ENCODE measurements at regions of chr12 and their contacts with region 1.

Region 1: GRCh38 chr12:110698171-110698902 is 9.4 kb upstream of the HVCN1 start:
- DNase-seq: peak; percentile 77 to 92 (median 78)
- ATAC-seq: peak; percentile 97
- H3K4me3 ChIP-seq: peak overlapping the region; percentile 10; the same call in 1 of the 2 replicates
- H3K27ac ChIP-seq: peak overlapping the region; percentile 72
- H3K4me1 ChIP-seq: peaks cover 35 to 42% of the 10 kb centered on the region in 2 experiments
- H3K27me3 ChIP-seq: no peaks in the 10 kb centered on the region
- CTCF ChIP-seq: peak; percentile 93 to 98 (median 96)
- EP300 ChIP-seq: peak; percentile 39; the same call in 1 of the 2 replicates
- POLR2A ChIP-seq: no peak; the same call in 1 of the 2 replicates
- RAD21 ChIP-seq: peak; percentile 86 to 88

Region 2: GRCh38 chr12:110619534-110619953 is 78.8 kb before region 1 on chr12:
- CTCF ChIA-PET with region 1: no interaction called
- POLR2A ChIA-PET with region 1: no interaction called
- in situ Hi-C with region 1: no loop called
- intact Hi-C with region 1: loop called (anchors 5 kb)
- DNase-seq: no peak
- ATAC-seq: peak; percentile 58; the same call in 1 of the 3 replicates
- H3K4me3 ChIP-seq: no peak overlapping the region
- H3K27ac ChIP-seq: no peak overlapping the region
- H3K4me1 ChIP-seq: peaks cover 0 to 3% of the 10 kb centered on the region in 2 experiments; a peak in 2 of 5 replicates
- H3K27me3 ChIP-seq: no peaks in the 10 kb centered on the region
- CTCF ChIP-seq: peak in 2 of 3 experiments; percentile 18 to 43; a peak in 3 of 6 replicates
- EP300 ChIP-seq: no peak
- POLR2A ChIP-seq: no peak
- RAD21 ChIP-seq: peak in 1 of 2 experiments; percentile 37; a peak in 2 of 4 replicates

Region 3: GRCh38 chr12:110639336-110640141 is 58.8 kb before region 1 on chr12:
- CTCF ChIA-PET with region 1: no interaction called
- POLR2A ChIA-PET with region 1: no interaction called
- in situ Hi-C with region 1: no loop called
- intact Hi-C with region 1: loop called (anchors 2 kb)
- DNase-seq: peak in 2 of 4 experiments; percentile 24 to 31
- ATAC-seq: peak; percentile 38; the same call in 1 of the 3 replicates
- H3K4me3 ChIP-seq: no peak overlapping the region
- H3K27ac ChIP-seq: no peak overlapping the region
- H3K4me1 ChIP-seq: peaks cover 8 to 33% of the 10 kb centered on the region in 2 experiments
- H3K27me3 ChIP-seq: peaks cover 0 to 14% of the 10 kb centered on the region in 2 experiments; a peak in 1 of 5 replicates
- CTCF ChIP-seq: no peak
- EP300 ChIP-seq: no peak
- POLR2A ChIP-seq: no peak
- RAD21 ChIP-seq: no peak

Region 4: GRCh38 chr12:110647631-110648040 is 50.7 kb before region 1 on chr12:
- CTCF ChIA-PET with region 1: no interaction called
- POLR2A ChIA-PET with region 1: no interaction called
- in situ Hi-C with region 1: no loop called
- intact Hi-C with region 1: loop called (anchors 2 kb)
- DNase-seq: no peak
- ATAC-seq: no peak
- H3K4me3 ChIP-seq: no peak overlapping the region
- H3K27ac ChIP-seq: no peak overlapping the region
- H3K4me1 ChIP-seq: no peaks in the 10 kb centered on the region
- H3K27me3 ChIP-seq: peaks cover 10 to 29% of the 10 kb centered on the region in 2 experiments; a peak in 4 of 5 replicates
- CTCF ChIP-seq: no peak
- EP300 ChIP-seq: no peak
- POLR2A ChIP-seq: no peak
- RAD21 ChIP-seq: no peak

Region 5: GRCh38 chr12:110888256-110888991 is 190.1 kb after region 1 on chr12:
- CTCF ChIA-PET with region 1: interaction called, 3 read pairs
- POLR2A ChIA-PET with region 1: no interaction called
- in situ Hi-C with region 1: no loop called
- intact Hi-C with region 1: loop called (anchors 5 kb)
- DNase-seq: no peak
- ATAC-seq: no peak
- H3K4me3 ChIP-seq: no peak overlapping the region
- H3K27ac ChIP-seq: no peak overlapping the region
- H3K4me1 ChIP-seq: no peaks in the 10 kb centered on the region
- H3K27me3 ChIP-seq: peaks cover 3 to 18% of the 10 kb centered on the region in 2 experiments
- CTCF ChIP-seq: no peak
- EP300 ChIP-seq: no peak
- POLR2A ChIP-seq: no peak
- RAD21 ChIP-seq: no peak

Measured in K562 (cell line).